ENCODE measurements at regions of chr6 and their contacts with region 1.

Region 1: DNA sequence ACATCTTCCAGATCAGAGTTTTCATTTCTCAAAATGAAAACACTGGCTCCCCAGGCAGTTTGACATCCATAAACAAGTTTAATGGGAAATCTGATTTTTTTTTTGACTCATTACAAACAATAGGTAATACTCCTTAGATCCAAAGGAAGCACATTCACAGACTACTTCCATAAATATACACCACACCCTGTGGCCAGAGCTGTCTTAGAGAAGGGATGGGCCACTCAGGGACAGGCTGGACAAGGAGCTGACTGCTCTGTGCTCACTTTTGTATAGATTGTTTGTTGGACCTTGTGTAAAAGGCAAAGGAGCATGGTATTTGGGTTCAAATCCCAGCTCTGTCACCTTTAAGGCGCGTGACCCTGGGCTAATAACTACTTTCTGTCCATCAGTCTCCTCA is 12.8 kb upstream of the DDO start:
- DNase-seq: no peak

Region 2: GRCh38 chr6:111087106-111087835 is 659.1 kb after region 1 on chr6 and contains the start of gene SLC16A10:
- intact Hi-C with region 1: loop called in 1 of 2 experiments (anchors 5 kb)
- DNase-seq: peak; percentile 87
- total RNA-seq, gene SLC16A10: 5.8 to 7.6 TPM